ENCODE measurements at regions of chr22 and their contacts with region 1.

Region 1: GRCh38 chr22:36331306-36331911 is 56.4 kb downstream of the MYH9 start:
- DNase-seq: peak; percentile 59
- ATAC-seq: peak; percentile 57
- H3K4me3 Mint-ChIP-seq: peak overlapping the region; percentile 82
- H3K27ac Mint-ChIP-seq: peak overlapping the region; percentile 99
- H3K4me1 Mint-ChIP-seq: peaks cover 95% of the 10 kb centered on the region
- H3K27me3 Mint-ChIP-seq: no peaks in the 10 kb centered on the region
- CTCF ChIP-seq: no peak

Region 2: GRCh38 chr22:35987487-35987886 is 343.9 kb before region 1 on chr22:
- CTCF ChIA-PET with region 1: no interaction called
- POLR2A ChIA-PET with region 1: no interaction called
- intact Hi-C with region 1: no loop called
- DNase-seq: no peak
- ATAC-seq: no peak
- H3K4me3 Mint-ChIP-seq: no peak overlapping the region
- H3K27ac Mint-ChIP-seq: no peak overlapping the region
- H3K4me1 Mint-ChIP-seq: no peaks in the 10 kb centered on the region
- H3K27me3 Mint-ChIP-seq: peaks cover 19% of the 10 kb centered on the region
- CTCF ChIP-seq: no peak

Region 3: DNA sequence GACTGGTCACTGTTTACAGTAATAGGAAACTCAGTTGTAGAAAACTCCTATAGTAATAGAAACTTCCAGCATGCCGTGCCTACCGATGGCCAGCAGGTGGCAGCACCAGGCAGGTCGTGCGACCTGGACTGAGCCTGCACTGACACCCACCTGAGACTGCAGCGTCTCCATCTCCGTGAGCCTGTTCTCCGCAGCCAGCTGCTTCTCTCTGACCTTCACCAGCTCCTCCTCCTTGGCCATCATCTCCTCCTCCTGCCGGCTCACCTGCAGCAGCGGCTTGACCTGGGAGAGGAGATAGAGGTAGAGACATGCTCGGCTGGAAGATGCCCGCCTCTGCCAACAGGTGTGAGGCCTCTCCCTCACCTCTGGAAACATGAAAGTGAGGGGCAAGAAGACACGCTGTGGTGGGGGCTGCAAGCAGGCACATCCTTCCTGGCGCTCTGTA is 30.0 kb before region 1 on chr22:
- CTCF ChIA-PET with region 1: interaction called, 17 read pairs
- POLR2A ChIA-PET with region 1: interaction called, 9 read pairs
- intact Hi-C with region 1: no loop called
- DNase-seq: peak; percentile 74
- ATAC-seq: peak; percentile 89
- H3K4me3 Mint-ChIP-seq: no peak overlapping the region
- H3K27ac Mint-ChIP-seq: peak overlapping the region; percentile 21
- H3K4me1 Mint-ChIP-seq: peaks cover 7% of the 10 kb centered on the region
- H3K27me3 Mint-ChIP-seq: no peaks in the 10 kb centered on the region
- CTCF ChIP-seq: peak; percentile 70

Region 4: GRCh38 chr22:36365020-36365411 is 33.6 kb after region 1 on chr22:
- CTCF ChIA-PET with region 1: interaction called, 3 read pairs
- POLR2A ChIA-PET with region 1: interaction called, 25 read pairs
- intact Hi-C with region 1: loop called (anchors 1 kb)
- DNase-seq: peak; percentile 51
- ATAC-seq: peak; percentile 96
- H3K4me3 Mint-ChIP-seq: peak overlapping the region; percentile 68
- H3K27ac Mint-ChIP-seq: peak overlapping the region; percentile 82
- H3K4me1 Mint-ChIP-seq: peaks cover 97% of the 10 kb centered on the region
- H3K27me3 Mint-ChIP-seq: no peaks in the 10 kb centered on the region
- CTCF ChIP-seq: no peak

Region 5: GRCh38 chr22:36379593-36380361 is 48.4 kb after region 1 on chr22:
- CTCF ChIA-PET with region 1: interaction called, 3 read pairs
- POLR2A ChIA-PET with region 1: interaction called, 86 read pairs
- intact Hi-C with region 1: no loop called
- DNase-seq: no peak
- ATAC-seq: peak; percentile 52
- H3K4me3 Mint-ChIP-seq: peak overlapping the region; percentile 59
- H3K27ac Mint-ChIP-seq: peak overlapping the region; percentile 92
- H3K4me1 Mint-ChIP-seq: peaks cover 95% of the 10 kb centered on the region
- H3K27me3 Mint-ChIP-seq: no peaks in the 10 kb centered on the region
- CTCF ChIP-seq: no peak

Region 6: GRCh38 chr22:36454916-36455570 is 123.6 kb after region 1 on chr22:
- CTCF ChIA-PET with region 1: interaction called, 4 read pairs
- POLR2A ChIA-PET with region 1: interaction called, 20 read pairs
- intact Hi-C with region 1: loop called (anchors 1 kb)
- DNase-seq: peak; percentile 91
- ATAC-seq: peak; percentile 66
- H3K4me3 Mint-ChIP-seq: peak overlapping the region; percentile 69
- H3K27ac Mint-ChIP-seq: peak overlapping the region; percentile 95
- H3K4me1 Mint-ChIP-seq: peaks cover 56% of the 10 kb centered on the region
- H3K27me3 Mint-ChIP-seq: no peaks in the 10 kb centered on the region
- CTCF ChIP-seq: no peak

Region 7: DNA sequence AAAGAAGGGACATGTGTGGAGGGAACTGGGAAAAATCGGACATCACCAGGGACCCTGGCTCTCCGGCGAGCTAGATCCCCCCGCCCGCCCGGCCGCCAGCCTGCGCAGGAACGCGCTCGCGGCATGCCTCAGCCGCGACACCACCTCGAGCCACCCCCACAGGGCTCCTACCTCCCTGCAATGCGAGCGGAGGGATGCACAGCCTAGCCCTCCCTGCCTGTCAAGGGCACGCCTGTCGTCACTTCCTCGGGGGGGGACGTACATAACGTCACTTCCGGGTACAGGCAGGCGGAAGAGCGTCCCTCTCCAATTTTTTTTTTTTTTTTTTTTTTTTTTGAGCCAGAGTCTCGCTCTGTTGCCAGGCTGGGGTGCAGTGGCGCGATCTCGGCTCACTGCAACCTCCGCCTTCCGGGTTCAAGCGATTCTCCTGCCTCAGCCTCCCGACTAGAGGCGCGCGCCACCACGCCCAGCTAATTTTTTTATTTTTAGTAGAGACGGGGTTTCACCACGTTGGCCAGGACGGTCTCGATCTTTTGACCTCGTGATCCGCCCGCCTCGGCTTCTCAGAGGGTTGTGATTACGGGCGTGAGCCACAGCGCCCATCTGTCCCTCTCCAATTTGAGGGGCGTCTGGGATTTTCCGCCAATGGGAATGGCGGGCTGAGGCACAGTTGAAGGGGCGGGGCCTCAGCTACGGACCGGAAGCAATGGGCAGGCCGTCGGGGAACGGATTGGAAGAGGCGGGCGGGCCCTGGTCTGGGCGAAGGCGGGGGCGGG is 150.2 kb after region 1 on chr22 and contains the start of gene TXN2:
- CTCF ChIA-PET with region 1: interaction called, 5 read pairs
- POLR2A ChIA-PET with region 1: interaction called, 20 read pairs
- intact Hi-C with region 1: no loop called
- DNase-seq: peak; percentile 94
- ATAC-seq: peak; percentile 87
- H3K4me3 Mint-ChIP-seq: peak within 1 kb of the TSS; percentile 92
- H3K27ac Mint-ChIP-seq: peak within 1 kb of the TSS; percentile 91
- H3K4me1 Mint-ChIP-seq: peaks cover 18% of the 10 kb centered on the region
- H3K27me3 Mint-ChIP-seq: no peaks in the 10 kb centered on the region
- CTCF ChIP-seq: no peak
- total RNA-seq, gene TXN2: 59.1 and 71.7 TPM in 2 replicates

Measured in activated B cell treated with CpG ODN at 0.5 μM for 24 hours (primary cell).